PC-9 (cell line): ENCODE measurements at regions of chr20 and their contacts with region 1.

Region 1: GRCh38 chr20:14775518-14776203 is 438.2 kb upstream of the FLRT3 start:
- DNase-seq: peak; percentile 67 to 71
- H3K4me3 ChIP-seq: no peak overlapping the region
- H3K27ac ChIP-seq: no peak overlapping the region
- H3K4me1 ChIP-seq: no peaks in the 10 kb centered on the region
- H3K27me3 ChIP-seq: no peaks in the 10 kb centered on the region
- CTCF ChIP-seq: no peak

Region 2: DNA sequence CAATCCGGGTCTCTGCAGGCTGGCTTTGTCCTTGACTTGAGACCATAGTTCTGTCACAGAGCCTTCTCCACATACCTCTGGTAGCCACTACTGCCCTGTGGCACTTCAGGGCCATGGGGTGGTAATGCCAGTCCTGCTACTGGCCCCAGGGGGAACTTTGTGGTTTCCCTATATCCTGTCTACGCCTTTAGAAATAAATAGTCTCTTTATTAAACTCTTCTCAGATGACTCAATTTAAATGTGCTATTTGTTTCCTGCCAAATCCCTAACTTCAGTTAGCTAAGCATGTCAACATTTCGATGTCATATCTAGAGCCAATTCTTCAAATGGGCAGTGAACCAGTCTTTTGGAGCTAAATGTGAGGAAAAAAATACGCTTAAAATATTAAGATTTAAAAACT is 845.4 kb before region 1 on chr20:
- CTCF ChIA-PET with region 1: no interaction called
- POLR2A ChIA-PET with region 1: no interaction called
- intact Hi-C with region 1: no loop called
- DNase-seq: peak; percentile 53 to 67
- H3K4me3 ChIP-seq: no peak overlapping the region
- H3K27ac ChIP-seq: no peak overlapping the region
- H3K4me1 ChIP-seq: 0 out of 2 replicates have a peak, but pooled peaks cover 9% of the 10 kb centered on the region
- H3K27me3 ChIP-seq: no peaks in the 10 kb centered on the region
- CTCF ChIP-seq: no peak

Region 3: GRCh38 chr20:14712302-14712739 is 63.3 kb before region 1 on chr20:
- CTCF ChIA-PET with region 1: no interaction called
- POLR2A ChIA-PET with region 1: no interaction called
- intact Hi-C with region 1: loop called (anchors 1 kb)
- DNase-seq: peak; percentile 56 to 86
- H3K4me3 ChIP-seq: no peak overlapping the region
- H3K27ac ChIP-seq: peak overlapping the region; percentile 54
- H3K4me1 ChIP-seq: no peaks in the 10 kb centered on the region
- H3K27me3 ChIP-seq: no peaks in the 10 kb centered on the region
- CTCF ChIP-seq: no peak

Region 4: DNA sequence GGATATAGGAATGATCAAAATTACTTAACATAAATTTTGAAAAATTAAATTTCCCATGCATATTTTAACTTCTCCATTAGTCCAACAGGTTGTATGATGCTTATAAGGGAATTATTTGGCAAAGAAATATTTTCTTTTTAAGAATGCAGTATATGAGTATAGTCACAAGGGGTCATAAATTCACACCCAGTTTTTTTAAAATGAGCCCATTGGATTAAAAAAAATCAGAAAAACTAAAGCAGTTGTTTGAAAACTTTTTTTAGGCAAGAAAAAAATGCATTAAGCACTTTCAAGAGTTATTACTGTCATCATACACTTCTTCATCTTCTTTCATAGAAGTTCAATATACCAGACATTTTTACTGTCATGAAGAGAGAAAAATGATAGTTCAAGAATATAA is 34.0 kb before region 1 on chr20:
- CTCF ChIA-PET with region 1: no interaction called
- POLR2A ChIA-PET with region 1: no interaction called
- intact Hi-C with region 1: no loop called
- DNase-seq: no peak
- H3K4me3 ChIP-seq: no peak overlapping the region
- H3K27ac ChIP-seq: no peak overlapping the region
- H3K4me1 ChIP-seq: no peaks in the 10 kb centered on the region
- H3K27me3 ChIP-seq: no peaks in the 10 kb centered on the region
- CTCF ChIP-seq: no peak

Region 5: GRCh38 chr20:14878768-14879697 is 103.4 kb after region 1 on chr20:
- CTCF ChIA-PET with region 1: no interaction called
- POLR2A ChIA-PET with region 1: no interaction called
- intact Hi-C with region 1: loop called (anchors 10 kb)
- DNase-seq: peak in 1 of 2 experiments; percentile 88
- H3K4me3 ChIP-seq: no peak overlapping the region
- H3K27ac ChIP-seq: peak overlapping the region; percentile 93
- H3K4me1 ChIP-seq: peaks cover 7% of the 10 kb centered on the region; the same call in 1 of the 2 replicates
- H3K27me3 ChIP-seq: no peaks in the 10 kb centered on the region
- CTCF ChIP-seq: no peak

Region 6: GRCh38 chr20:14986026-14986655 is 210.5 kb after region 1 on chr20:
- CTCF ChIA-PET with region 1: no interaction called
- POLR2A ChIA-PET with region 1: no interaction called
- intact Hi-C with region 1: loop called (anchors 5 kb)
- DNase-seq: peak; percentile 73 to 90
- H3K4me3 ChIP-seq: no peak overlapping the region
- H3K27ac ChIP-seq: peak overlapping the region; percentile 60
- H3K4me1 ChIP-seq: peaks cover 19% of the 10 kb centered on the region
- H3K27me3 ChIP-seq: no peaks in the 10 kb centered on the region
- CTCF ChIP-seq: no peak

Region 7: GRCh38 chr20:15045246-15045645 is 269.6 kb after region 1 on chr20:
- CTCF ChIA-PET with region 1: no interaction called
- POLR2A ChIA-PET with region 1: interaction called, 15 read pairs
- intact Hi-C with region 1: no loop called
- DNase-seq: no peak
- H3K4me3 ChIP-seq: no peak overlapping the region
- H3K27ac ChIP-seq: no peak overlapping the region
- H3K4me1 ChIP-seq: no peaks in the 10 kb centered on the region
- H3K27me3 ChIP-seq: no peaks in the 10 kb centered on the region
- CTCF ChIP-seq: no peak

Region 8: DNA sequence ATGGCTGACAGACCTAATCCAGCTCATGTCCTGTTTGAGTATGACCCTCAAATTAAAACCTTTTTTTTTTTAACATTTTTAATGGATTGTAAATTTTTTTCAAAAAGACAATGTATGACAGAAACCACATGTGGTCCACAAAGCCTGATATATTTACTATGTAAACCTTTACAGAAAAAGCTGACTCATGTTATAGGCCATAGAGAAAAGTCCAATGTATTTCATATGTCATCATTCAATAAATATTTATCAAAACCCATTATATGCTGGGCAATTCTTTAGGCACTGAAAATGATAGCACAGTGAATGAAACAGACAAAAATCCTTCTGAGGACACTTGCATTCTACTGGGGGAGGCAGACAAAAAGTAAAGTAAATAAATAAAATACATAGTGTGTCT is 388.0 kb after region 1 on chr20:
- CTCF ChIA-PET with region 1: no interaction called
- POLR2A ChIA-PET with region 1: interaction called, 11 read pairs
- intact Hi-C with region 1: no loop called
- DNase-seq: no peak
- H3K4me3 ChIP-seq: no peak overlapping the region
- H3K27ac ChIP-seq: no peak overlapping the region
- H3K4me1 ChIP-seq: no peaks in the 10 kb centered on the region
- H3K27me3 ChIP-seq: no peaks in the 10 kb centered on the region
- CTCF ChIP-seq: no peak